PC-9 (cell line): ENCODE measurements at regions of chr3 and their contacts with region 1.

Region 1: GRCh38 chr3:188487652-188488051 is 333.7 kb downstream of the LPP start:
- DNase-seq: no peak
- H3K4me3 ChIP-seq: no peak overlapping the region
- H3K27ac ChIP-seq: no peak overlapping the region
- H3K4me1 ChIP-seq: peaks cover 10% of the 10 kb centered on the region; the same call in 1 of the 2 replicates
- H3K27me3 ChIP-seq: no peaks in the 10 kb centered on the region
- CTCF ChIP-seq: no peak

Region 2: DNA sequence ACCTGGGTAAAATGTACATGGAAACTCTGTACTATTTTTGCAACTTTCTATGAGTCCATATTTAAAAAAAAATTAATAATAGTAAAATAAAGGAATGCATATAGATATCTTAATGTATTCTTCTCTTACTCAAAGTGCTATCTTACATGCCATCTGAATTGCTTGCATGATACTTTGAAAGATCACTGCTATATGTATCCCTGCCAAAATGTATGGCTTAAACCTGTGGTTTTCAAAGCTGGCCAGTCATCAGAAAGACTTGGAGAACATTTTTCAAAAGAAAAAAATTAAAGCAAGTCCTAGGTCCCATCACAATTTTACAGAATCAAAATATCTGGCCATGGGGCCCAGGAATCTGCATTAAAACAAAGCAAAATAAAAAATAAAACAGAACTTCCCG is 71.6 kb before region 1 on chr3:
- CTCF ChIA-PET with region 1: interaction called, 16 read pairs
- POLR2A ChIA-PET with region 1: no interaction called
- intact Hi-C with region 1: no loop called
- DNase-seq: no peak
- H3K4me3 ChIP-seq: no peak overlapping the region
- H3K27ac ChIP-seq: no peak overlapping the region
- H3K4me1 ChIP-seq: peaks cover 6% of the 10 kb centered on the region; the same call in 1 of the 2 replicates
- H3K27me3 ChIP-seq: no peaks in the 10 kb centered on the region
- CTCF ChIP-seq: no peak